Cardiac septum (tissue), 1 donor: ENCODE measurements at regions of chr12 and their contacts with region 1.

Region 1: DNA sequence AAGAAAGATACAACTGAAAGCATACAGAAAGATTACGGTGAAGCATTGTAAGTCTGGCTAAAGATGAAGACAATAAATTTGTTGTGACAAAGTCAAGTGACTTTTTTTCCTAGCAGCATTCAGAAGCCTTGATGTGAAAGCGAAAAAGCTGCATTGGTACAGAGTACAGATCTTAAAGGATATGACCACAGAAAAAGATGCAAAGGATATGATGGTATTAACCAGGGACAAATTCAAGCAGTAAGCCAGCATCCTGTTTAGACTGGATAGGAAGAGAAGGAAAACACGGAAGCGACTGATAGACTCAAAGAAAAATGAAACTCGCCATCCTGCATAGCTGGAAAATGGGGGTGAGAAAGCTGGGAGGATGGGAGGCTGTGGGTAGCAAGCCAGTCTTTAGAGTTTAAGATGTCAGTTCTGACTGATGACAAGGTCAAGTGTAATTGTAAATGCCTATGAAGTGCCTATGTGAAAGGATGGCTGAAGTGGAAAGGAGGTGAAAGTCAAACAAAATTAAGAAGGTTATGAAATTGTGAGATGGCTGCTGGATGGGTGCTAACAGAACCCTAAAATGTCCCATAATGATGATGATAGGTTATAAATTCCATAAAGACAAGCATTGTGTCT is 92.4 kb downstream of the PHLDA1 start:
- DNase-seq: no peak

Region 2: DNA sequence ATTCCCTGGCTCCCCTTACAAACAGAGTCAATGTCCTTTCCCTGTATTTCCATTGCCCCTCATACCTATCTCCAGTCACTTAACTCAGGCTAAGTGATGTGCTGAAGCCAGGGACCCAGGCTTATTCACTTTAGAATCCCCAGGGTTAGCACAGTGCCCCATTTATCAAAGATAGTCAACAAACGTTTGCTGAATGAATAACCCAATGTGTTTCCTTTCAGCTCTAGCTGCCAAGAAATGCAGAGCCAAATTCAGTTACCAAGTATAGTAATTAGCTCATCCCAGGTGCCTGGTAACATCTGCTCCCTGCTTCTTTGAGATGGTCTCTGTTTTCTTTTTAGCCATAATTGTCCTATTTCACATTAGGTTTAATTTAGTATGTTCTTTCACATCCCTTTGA is 97.0 kb before region 1 on chr12:
- intact Hi-C with region 1: loop called (anchors 5 kb)
- DNase-seq: no peak

Region 3: GRCh38 chr12:75977952-75978671 is 39.0 kb after region 1 on chr12:
- intact Hi-C with region 1: loop called (anchors 5 kb)
- DNase-seq: peak; percentile 79